ENCODE measurements at regions of chr13 and their contacts with region 1.

Region 1: GRCh38 chr13:41193919-41194824 is at the start of gene KBTBD7:
- DNase-seq: peak; percentile 96 to 97
- H3K4me3 ChIP-seq: peak within 1 kb of the TSS; percentile 58
- H3K4me3 Mint-ChIP-seq: peak within 1 kb of the TSS; percentile 82
- H3K27ac Mint-ChIP-seq: peak within 1 kb of the TSS; percentile 91
- H3K4me1 ChIP-seq: peaks cover 13% of the 10 kb centered on the region
- H3K4me1 Mint-ChIP-seq: peaks cover 16% of the 10 kb centered on the region
- H3K27me3 ChIP-seq: no peaks in the 10 kb centered on the region
- H3K27me3 Mint-ChIP-seq: no peaks in the 10 kb centered on the region
- CTCF ChIP-seq: no peak
- total RNA-seq, gene KBTBD7: 10.1 and 10.5 TPM in 2 replicates

Region 2: DNA sequence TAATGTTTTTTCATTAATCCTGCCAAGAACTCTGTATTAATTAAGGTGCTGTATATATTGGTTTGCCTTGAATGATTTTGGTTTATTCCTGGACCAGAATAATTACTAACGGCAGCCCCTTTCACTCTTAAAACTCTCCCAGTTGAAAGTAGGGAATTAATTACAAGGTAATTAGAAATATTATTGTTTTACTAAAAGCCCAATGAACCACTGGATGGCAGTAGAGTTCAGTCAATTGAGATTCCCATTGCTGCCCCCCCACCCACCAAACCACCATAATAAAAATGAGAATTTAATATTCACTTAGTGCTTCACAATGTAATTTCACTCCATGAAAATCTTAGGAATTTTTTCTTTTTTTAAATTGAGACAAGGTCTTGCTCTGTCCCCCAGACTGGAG is 119.1 kb before region 1 on chr13:
- CTCF ChIA-PET with region 1: no interaction called
- POLR2A ChIA-PET with region 1: no interaction called
- intact Hi-C with region 1: loop called (anchors 1 kb)
- DNase-seq: peak in 1 of 2 experiments; percentile 41
- H3K4me3 ChIP-seq: no peak overlapping the region
- H3K4me3 Mint-ChIP-seq: no peak overlapping the region
- H3K27ac Mint-ChIP-seq: no peak overlapping the region
- H3K4me1 ChIP-seq: no peaks in the 10 kb centered on the region
- H3K4me1 Mint-ChIP-seq: no peaks in the 10 kb centered on the region
- H3K27me3 ChIP-seq: no peaks in the 10 kb centered on the region
- H3K27me3 Mint-ChIP-seq: no peaks in the 10 kb centered on the region
- CTCF ChIP-seq: peak; percentile 36 to 68

Region 3: GRCh38 chr13:41132512-41133152 is 61.5 kb before region 1 on chr13 and contains the start of gene KBTBD6:
- CTCF ChIA-PET with region 1: no interaction called
- POLR2A ChIA-PET with region 1: no interaction called
- intact Hi-C with region 1: loop called (anchors 1 kb)
- DNase-seq: peak; percentile 98
- H3K4me3 ChIP-seq: peak within 1 kb of the TSS; percentile 66
- H3K4me3 Mint-ChIP-seq: peak within 1 kb of the TSS; percentile 89
- H3K27ac Mint-ChIP-seq: peak within 1 kb of the TSS; percentile 86
- H3K4me1 ChIP-seq: no peaks in the 10 kb centered on the region
- H3K4me1 Mint-ChIP-seq: peaks cover 20% of the 10 kb centered on the region
- H3K27me3 ChIP-seq: no peaks in the 10 kb centered on the region
- H3K27me3 Mint-ChIP-seq: no peaks in the 10 kb centered on the region
- CTCF ChIP-seq: no peak
- total RNA-seq, gene KBTBD6: 9.3 and 9.5 TPM in 2 replicates

Region 4: GRCh38 chr13:41222259-41222852 is 28.2 kb after region 1 on chr13:
- CTCF ChIA-PET with region 1: no interaction called
- POLR2A ChIA-PET with region 1: no interaction called
- intact Hi-C with region 1: loop called (anchors 2 kb)
- DNase-seq: peak; percentile 50 to 68
- H3K4me3 ChIP-seq: no peak overlapping the region
- H3K4me3 Mint-ChIP-seq: no peak overlapping the region
- H3K27ac Mint-ChIP-seq: no peak overlapping the region
- H3K4me1 ChIP-seq: peaks cover 14% of the 10 kb centered on the region
- H3K4me1 Mint-ChIP-seq: peaks cover 8% of the 10 kb centered on the region
- H3K27me3 ChIP-seq: no peaks in the 10 kb centered on the region
- H3K27me3 Mint-ChIP-seq: no peaks in the 10 kb centered on the region
- CTCF ChIP-seq: peak; percentile 70 to 76

Region 5: DNA sequence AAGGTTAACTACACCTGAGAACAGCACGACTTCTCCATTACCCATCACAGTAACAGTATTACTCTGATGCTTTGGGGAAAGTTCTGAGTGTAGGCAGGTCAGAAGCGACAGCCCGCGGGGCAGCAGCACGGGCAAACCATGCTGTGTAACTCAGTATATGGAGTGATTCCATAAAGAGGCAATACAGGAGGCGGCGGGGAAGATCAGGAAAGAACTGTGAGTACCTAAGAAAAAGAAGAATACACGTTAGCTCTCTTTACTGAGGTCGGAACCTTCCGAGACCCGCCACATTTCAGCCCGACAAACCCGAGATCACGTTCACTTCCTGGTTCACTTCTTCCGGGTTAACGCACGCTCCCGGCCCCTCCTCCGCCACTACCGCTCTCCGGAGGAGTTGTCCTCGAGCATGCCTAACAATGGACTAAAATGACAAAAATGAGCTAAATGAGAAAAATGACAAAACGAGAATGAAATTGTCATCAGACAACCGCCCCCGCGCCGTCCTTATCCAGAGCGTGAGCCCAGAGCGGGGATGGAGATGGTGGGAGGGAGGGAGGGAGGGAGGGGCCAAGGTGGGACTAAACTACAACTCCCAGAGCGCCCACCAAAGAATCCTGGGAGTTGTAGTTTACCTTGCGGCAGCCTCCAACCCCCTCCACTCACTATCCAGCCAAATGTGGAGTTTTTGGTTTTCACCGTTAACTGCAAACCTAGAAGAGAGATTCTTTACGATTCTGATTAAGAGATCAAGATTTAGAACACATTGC is 69.3 kb after region 1 on chr13 and contains the start of gene MTRF1:
- CTCF ChIA-PET with region 1: no interaction called
- POLR2A ChIA-PET with region 1: no interaction called
- intact Hi-C with region 1: loop called (anchors 2 kb)
- DNase-seq: peak; percentile 78 to 79
- H3K4me3 ChIP-seq: peak within 1 kb of the TSS; percentile 92
- H3K4me3 Mint-ChIP-seq: peak within 1 kb of the TSS; percentile 92
- H3K27ac Mint-ChIP-seq: peak within 1 kb of the TSS; percentile 91
- H3K4me1 ChIP-seq: no peaks in the 10 kb centered on the region
- H3K4me1 Mint-ChIP-seq: no peaks in the 10 kb centered on the region
- H3K27me3 ChIP-seq: no peaks in the 10 kb centered on the region
- H3K27me3 Mint-ChIP-seq: no peaks in the 10 kb centered on the region
- CTCF ChIP-seq: no peak
- total RNA-seq, gene MTRF1: 21.2 and 24.7 TPM in 2 replicates

Region 6: GRCh38 chr13:41284512-41285288 is 90.5 kb after region 1 on chr13:
- CTCF ChIA-PET with region 1: no interaction called
- POLR2A ChIA-PET with region 1: no interaction called
- intact Hi-C with region 1: no loop called
- DNase-seq: peak in 1 of 2 experiments; percentile 15
- H3K4me3 ChIP-seq: no peak overlapping the region
- H3K4me3 Mint-ChIP-seq: no peak overlapping the region
- H3K27ac Mint-ChIP-seq: peak overlapping the region; percentile 59
- H3K4me1 ChIP-seq: no peaks in the 10 kb centered on the region
- H3K4me1 Mint-ChIP-seq: peaks cover 7% of the 10 kb centered on the region
- H3K27me3 ChIP-seq: no peaks in the 10 kb centered on the region
- H3K27me3 Mint-ChIP-seq: no peaks in the 10 kb centered on the region
- CTCF ChIP-seq: no peak

Region 7: GRCh38 chr13:42926555-42926954 is 1732.4 kb after region 1 on chr13:
- CTCF ChIA-PET with region 1: no interaction called
- POLR2A ChIA-PET with region 1: no interaction called
- intact Hi-C with region 1: no loop called
- DNase-seq: no peak
- H3K4me3 ChIP-seq: no peak overlapping the region
- H3K4me3 Mint-ChIP-seq: no peak overlapping the region
- H3K27ac Mint-ChIP-seq: no peak overlapping the region
- H3K4me1 ChIP-seq: no peaks in the 10 kb centered on the region; the same call in 1 of the 2 replicates
- H3K4me1 Mint-ChIP-seq: no peaks in the 10 kb centered on the region
- H3K27me3 ChIP-seq: no peaks in the 10 kb centered on the region
- H3K27me3 Mint-ChIP-seq: no peaks in the 10 kb centered on the region
- CTCF ChIP-seq: no peak

Measured in Caco-2 (cell line).